ENCODE measurements at regions of chr5 and their contacts with region 1.

Region 1: DNA sequence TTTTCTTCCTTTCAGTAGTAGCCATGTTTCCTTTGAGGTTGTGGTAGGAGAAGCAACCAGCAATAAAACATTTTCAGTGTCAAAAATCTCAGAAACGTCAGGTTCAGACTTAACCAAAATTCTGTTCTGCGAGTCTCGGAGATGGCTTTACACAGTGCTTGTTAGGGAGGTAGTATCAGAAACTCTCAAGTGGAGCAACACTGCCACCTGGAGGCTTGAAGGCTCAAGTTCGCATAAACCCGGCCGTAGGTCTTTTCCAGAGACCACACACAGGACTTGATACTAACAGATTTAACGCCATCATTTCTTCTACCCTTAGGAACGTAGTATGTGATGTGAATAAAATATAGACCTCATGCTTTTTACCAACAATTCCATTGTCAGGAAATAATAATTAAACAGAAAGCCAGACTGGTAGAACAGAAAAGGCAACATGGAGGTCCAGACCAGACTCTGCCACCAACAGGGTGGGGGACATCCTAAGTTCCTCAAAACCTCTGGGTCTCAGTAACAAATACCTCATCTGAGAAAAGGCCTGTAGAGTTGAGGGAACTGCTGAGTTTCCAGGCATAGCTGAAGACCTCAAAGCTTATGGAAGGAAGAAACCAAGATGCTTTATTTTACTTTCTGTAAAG is 8.5 kb downstream of the PTGER4 start:
- DNase-seq: peak; percentile 82
- ATAC-seq: peak; percentile 93

Region 2: DNA sequence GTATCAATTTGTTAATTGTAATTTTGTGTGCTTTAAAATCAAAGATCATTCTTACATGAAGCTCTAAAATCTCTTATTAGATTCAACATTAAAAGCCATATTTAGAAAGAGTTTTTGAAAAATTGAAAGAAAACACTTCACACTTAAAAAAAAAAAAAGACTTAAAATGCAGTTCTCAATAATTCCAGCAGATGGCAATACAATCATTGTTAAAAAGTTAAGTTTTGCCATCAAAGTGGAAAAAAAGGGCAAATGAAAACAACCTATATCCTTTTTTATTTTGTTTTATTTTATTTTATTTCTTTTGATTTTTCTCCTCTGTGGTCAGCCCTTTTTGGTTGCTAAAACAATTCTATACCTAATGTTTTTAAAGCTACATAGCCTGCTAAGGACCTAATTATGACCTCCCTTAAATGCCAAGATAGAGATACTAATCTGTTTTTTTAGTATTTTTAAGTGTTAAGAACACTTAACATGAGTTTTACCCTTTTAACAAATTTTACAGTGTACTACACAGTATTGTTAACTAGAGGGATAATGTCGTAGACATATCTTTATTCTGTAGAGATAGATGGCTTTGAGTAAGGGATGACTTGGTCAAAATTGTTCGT is 1109.3 kb before region 1 on chr5:
- intact Hi-C with region 1: loop called (anchors 2 kb)
- DNase-seq: no peak
- ATAC-seq: no peak

Region 3: GRCh38 chr5:39714036-39714698 is 974.1 kb before region 1 on chr5:
- intact Hi-C with region 1: loop called (anchors 5 kb)
- DNase-seq: no peak
- ATAC-seq: peak; percentile 52

Region 4: GRCh38 chr5:39948867-39949468 is 739.3 kb before region 1 on chr5:
- intact Hi-C with region 1: loop called (anchors 2 kb)
- DNase-seq: no peak
- ATAC-seq: no peak

Region 5: GRCh38 chr5:40165794-40166728 is 522.2 kb before region 1 on chr5:
- intact Hi-C with region 1: loop called (anchors 5 kb)
- DNase-seq: no peak
- ATAC-seq: no peak